ENCODE measurements at regions of chr14 and their contacts with region 1.

Region 1: DNA sequence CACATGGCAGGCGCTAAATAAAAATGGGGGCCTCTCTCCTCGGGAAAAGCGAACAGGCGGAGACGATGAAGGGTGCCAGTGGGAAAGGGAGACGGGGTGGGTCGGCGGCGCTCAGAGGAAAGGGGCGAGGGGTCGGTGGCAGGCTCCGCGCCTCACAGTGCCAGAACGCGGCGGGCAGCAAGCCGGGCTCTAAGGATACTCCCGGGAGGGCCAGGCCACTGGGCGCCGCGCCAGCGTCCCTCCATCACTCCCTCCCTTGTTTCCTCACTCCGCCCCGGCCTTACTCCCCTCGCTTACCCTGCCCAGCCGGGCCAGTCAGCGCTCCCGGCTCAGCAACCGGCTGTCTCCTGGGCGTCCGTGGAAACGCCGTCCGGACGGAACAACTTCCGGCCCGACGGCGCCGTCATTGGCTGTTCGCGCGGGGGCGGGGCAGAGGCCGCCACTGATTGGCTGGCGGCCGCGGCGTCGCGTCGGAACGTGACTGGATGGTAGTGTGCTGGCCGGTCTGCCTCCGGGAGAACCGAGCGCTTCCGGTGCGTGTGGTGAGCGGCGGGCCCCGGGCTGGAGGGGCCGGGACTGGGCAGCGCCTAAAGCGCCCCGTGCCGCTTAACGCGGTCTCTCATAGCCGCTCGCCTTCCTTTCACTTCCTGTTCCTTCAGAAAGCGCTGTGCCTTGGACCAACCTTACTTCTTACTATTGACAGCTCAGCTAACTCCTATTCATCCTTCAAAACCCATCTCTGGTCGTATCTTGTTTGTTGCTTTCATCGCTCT is 53.0 kb downstream of the SLC25A47 start:
- DNase-seq: peak; percentile 94
- H3K4me3 Mint-ChIP-seq: peak within 1 kb of the TSS; percentile 97
- H3K27ac Mint-ChIP-seq: peak within 1 kb of the TSS; percentile 96
- H3K4me1 Mint-ChIP-seq: peaks cover 53% of the 10 kb centered on the region
- H3K27me3 Mint-ChIP-seq: peaks cover 2% of the 10 kb centered on the region

Region 2: DNA sequence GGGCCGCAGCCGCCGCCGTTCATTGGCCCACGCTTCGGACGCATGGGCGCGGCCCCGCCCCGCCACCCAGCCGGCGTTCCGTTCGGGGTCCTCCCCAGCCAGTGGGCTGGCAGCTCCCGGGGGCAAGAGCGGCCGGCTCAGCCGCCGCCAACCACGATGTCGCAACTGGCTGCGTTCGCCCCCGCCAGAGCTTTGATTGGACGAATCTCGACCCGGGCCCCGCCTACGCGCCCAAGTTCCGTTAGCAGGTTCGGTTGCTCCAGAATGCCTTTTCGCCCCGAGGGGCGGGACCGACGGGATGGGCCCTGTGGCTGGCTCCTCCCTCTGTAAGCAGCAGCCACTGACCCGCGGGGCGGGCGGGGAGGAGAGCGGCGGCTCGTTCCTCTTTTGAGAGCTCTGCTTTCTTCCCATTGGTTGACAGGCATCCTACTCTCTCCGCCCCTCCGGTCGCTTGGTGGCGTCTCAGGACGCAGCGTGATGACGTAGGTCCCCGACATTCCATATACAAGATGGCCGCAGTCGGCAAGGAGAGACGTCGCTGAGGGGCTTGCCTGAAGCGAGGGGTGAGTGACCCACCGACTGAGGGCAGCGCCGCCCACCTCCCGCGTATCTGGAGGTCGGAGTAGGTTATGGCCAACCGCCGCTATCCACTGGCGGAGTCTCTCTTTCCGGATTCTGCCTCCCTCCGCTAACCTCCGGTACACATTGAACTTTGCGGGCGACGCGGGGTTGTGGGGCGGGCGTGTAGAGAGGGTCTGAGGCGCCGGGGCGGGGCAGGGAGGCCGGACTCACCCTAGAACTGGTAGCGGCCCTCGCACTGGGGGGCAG is 895.0 kb before region 1 on chr14 and contains the start of gene CCNK:
- intact Hi-C with region 1: loop called (anchors 1 kb)
- DNase-seq: peak; percentile 100
- H3K4me3 Mint-ChIP-seq: peak within 1 kb of the TSS; percentile 98
- H3K27ac Mint-ChIP-seq: peak within 1 kb of the TSS; percentile 98
- H3K4me1 Mint-ChIP-seq: peaks cover 49% of the 10 kb centered on the region
- H3K27me3 Mint-ChIP-seq: no peaks in the 10 kb centered on the region
- total RNA-seq, gene CCNK: 80.8 and 87.1 TPM in 2 replicates

Region 3: DNA sequence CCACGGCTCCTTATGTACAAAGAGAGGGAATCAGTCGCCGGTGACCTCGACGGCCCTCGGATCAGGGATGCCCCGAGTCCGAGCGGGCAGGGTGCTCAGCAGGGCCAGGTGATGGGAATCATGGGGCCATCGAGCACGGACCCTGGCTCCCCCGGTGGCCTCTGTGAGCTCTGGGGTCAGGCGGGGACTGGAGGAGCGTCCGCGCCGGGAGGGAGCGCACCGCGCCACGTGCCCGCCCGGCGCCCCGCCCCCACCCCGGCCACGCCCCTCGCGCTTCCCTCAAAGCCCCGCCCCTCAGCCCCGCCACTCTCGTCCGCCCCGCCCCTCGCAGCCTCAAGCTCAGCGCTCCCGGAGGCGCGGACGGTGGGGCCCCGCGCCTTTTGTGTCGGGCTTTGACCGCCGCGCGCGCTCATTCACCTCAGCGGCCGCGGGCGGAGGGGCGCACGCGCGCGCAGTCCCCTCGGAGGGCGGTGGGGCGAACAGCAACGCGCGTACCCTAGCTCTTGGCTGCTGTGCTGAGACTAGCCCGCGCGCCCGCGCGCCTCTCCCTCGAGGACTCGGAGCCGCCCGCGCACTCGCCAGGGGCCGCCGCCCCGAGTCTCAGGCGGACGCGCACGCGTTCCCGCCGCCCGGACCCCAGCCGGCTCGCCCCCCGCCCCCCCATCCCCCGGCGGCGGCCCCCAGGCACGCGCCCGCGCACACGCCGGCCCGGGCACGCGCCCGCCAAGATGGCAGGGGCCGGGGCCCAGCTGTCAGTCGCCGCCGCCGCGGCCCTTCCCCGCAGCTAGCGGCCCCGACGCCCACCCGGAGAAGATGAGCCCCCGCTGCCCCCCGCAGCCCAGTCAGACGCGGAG is 404.8 kb before region 1 on chr14:
- intact Hi-C with region 1: loop called (anchors 2 kb)
- DNase-seq: peak; percentile 68
- H3K4me3 Mint-ChIP-seq: peak overlapping the region; percentile 80
- H3K27ac Mint-ChIP-seq: no peak overlapping the region
- H3K4me1 Mint-ChIP-seq: peaks cover 13% of the 10 kb centered on the region
- H3K27me3 Mint-ChIP-seq: peaks cover 21% of the 10 kb centered on the region

Region 4: GRCh38 chr14:100213956-100214774 is 162.0 kb before region 1 on chr14:
- intact Hi-C with region 1: loop called (anchors 2 kb)
- DNase-seq: peak; percentile 88
- H3K4me3 Mint-ChIP-seq: peak overlapping the region; percentile 85
- H3K27ac Mint-ChIP-seq: peak overlapping the region; percentile 87
- H3K4me1 Mint-ChIP-seq: peaks cover 25% of the 10 kb centered on the region
- H3K27me3 Mint-ChIP-seq: peaks cover 2% of the 10 kb centered on the region

Region 5: DNA sequence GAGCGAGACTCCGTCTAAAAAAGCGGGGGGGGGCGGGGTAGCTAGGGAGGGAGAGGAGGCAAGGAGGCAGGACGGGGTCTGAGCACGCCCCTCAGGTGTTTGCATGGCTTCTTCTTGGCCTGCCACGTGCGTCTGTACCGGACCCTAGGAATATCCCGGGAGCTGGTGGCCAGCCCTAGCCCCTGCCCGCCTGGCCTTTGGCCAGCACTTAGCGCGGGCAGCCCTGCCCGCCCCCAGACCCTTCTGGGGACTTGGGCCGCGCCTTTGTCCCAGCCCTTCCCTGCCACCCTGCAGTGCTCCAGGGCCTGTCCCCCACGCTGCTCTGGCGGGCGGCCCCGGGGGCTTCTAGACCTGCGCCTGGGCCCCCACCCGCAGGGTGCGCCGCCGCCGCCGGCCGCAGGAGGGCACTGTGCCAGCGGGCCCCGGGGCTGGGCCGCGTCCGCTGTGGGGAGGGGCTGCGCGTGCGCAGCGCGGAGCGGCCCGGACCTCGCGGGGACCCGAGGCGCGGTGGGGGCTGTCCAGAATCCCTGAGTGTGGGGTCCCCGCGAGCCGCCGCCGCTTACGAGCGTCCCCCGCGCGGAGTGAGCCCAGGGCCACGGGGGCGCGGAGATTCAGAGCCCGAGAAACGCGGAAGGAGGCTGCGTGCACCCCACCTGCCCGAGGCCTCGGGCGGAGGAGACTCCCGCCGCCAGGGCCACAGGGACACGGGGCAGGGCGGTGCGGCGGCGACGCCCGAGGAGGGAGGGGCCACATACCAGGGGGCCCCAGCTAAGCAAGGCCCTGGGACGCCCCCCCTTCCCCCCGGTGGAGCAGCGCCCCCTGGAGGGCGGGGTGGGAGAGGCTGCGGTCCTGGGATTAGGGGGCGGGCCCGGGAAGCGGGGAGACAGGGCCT is 90.9 kb before region 1 on chr14:
- intact Hi-C with region 1: loop called (anchors 1 kb)
- DNase-seq: peak; percentile 77
- H3K4me3 Mint-ChIP-seq: no peak overlapping the region
- H3K27ac Mint-ChIP-seq: no peak overlapping the region
- H3K4me1 Mint-ChIP-seq: peaks cover 4% of the 10 kb centered on the region
- H3K27me3 Mint-ChIP-seq: no peaks in the 10 kb centered on the region

Region 6: DNA sequence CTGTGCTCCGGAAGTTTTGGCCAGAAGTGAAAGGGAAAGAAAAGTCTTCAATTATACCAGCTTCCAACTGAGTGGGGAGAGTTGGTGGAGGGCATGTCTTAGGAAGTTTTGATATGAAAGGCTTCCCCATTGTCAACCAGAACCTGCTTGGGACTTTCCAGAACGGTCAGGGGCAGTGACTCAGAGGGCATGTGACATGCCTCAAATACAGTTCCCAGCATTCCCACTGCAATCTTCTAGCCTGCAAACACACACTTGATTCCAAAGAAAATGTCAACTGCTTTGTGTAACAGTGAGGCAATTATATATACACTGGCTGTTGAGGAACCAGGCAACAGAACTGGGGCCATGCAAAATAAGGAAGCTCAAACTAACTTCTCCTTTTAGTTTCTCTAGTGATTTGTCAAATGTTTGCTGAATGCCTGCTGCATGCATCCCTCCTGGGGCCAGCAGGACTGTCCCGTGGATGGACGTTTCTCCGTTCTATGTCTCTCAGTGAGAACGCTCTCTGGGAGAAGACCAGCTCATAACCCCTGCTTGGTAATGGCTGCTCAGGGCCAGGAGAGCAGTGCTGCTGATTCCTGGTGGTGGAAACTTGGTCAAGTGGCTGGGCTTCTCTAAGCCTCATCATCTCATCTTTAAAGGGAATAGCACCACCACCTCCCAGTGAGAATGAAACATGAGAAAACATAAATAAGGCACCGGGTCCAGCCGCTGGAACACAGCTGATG is 34.7 kb before region 1 on chr14:
- intact Hi-C with region 1: loop called (anchors 1 kb)
- DNase-seq: peak; percentile 12
- H3K4me3 Mint-ChIP-seq: peak overlapping the region; percentile 38
- H3K27ac Mint-ChIP-seq: peak overlapping the region; percentile 80
- H3K4me1 Mint-ChIP-seq: peaks cover 34% of the 10 kb centered on the region
- H3K27me3 Mint-ChIP-seq: no peaks in the 10 kb centered on the region

Region 7: GRCh38 chr14:101809671-101810514 is 1433.7 kb after region 1 on chr14:
- intact Hi-C with region 1: loop called (anchors 10 kb)
- DNase-seq: peak; percentile 88
- H3K4me3 Mint-ChIP-seq: peak overlapping the region; percentile 96
- H3K27ac Mint-ChIP-seq: peak overlapping the region; percentile 100
- H3K4me1 Mint-ChIP-seq: peaks cover 52% of the 10 kb centered on the region
- H3K27me3 Mint-ChIP-seq: no peaks in the 10 kb centered on the region